ENCODE measurements at regions of chr14 and their contacts with region 1.

Region 1: DNA sequence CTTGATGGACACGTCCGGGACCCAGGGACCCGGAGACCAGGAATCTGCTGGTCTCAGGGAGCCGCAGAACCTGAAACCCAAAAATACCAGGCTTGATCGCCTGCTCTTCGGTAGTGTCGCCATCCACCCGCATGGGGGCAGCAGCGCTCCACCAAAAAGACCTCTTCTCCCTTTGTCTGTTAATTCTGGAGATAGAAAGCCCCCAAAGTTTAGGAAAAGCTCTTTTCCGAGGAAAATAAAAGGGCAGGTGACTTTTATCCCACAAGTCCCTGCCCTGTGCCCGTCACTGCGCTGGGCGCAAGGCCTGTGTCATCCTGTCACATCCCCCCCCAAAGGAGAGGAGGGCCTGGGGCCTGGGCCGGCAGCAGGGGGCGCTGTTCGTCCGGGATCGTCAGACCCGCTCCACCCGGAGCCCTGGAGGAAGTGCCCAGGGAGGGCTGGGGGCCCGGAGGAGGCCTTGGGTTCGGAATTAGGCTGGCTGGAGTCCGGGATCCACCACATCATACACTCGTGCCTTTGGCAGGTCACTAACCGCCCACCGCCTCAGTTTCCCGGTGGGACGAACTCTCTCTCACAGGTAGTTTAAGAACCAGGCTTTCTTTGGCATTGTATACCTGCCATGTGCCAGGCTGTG is 31.9 kb downstream of the DAD1 start:
- DNase-seq: peak; percentile 84 to 97 (median 93)
- ATAC-seq: peak; percentile 48
- H3K4me3 ChIP-seq: peak overlapping the region; percentile 65
- H3K4me3 Mint-ChIP-seq: peak overlapping the region; percentile 67 to 95 (median 88)
- H3K27ac ChIP-seq: peak overlapping the region; percentile 96
- H3K27ac Mint-ChIP-seq: peak overlapping the region; percentile 94 to 99 (median 99)
- H3K4me1 ChIP-seq: peaks cover 87 to 90% of the 10 kb centered on the region in 2 donors
- H3K4me1 Mint-ChIP-seq: peaks cover 62 to 95% (median 92%) of the 10 kb centered on the region in 7 donors
- H3K27me3 ChIP-seq: no peaks in the 10 kb centered on the region
- H3K27me3 Mint-ChIP-seq: peaks cover 0 to 4% (median 0%) of the 10 kb centered on the region in 5 donors

Region 2: GRCh38 chr14:21643407-21643806 is 913.7 kb before region 1 on chr14:
- CTCF ChIA-PET with region 1: no interaction called
- POLR2A ChIA-PET with region 1: no interaction called
- intact Hi-C with region 1: loop called in 1 of 2 experiments (anchors 5 kb)
- DNase-seq: peak in 1 of 9 donors; percentile 5
- ATAC-seq: no peak
- H3K4me3 ChIP-seq: no peak overlapping the region
- H3K4me3 Mint-ChIP-seq: peak overlapping the region in 3 of 10 donors; percentile 42 to 52 (median 42)
- H3K27ac ChIP-seq: no peak overlapping the region
- H3K27ac Mint-ChIP-seq: peak overlapping the region in 3 of 9 donors; percentile 25 to 64 (median 36)
- H3K4me1 ChIP-seq: no peaks in the 10 kb centered on the region
- H3K4me1 Mint-ChIP-seq: peaks cover 0 to 14% (median 6%) of the 10 kb centered on the region in 7 donors
- H3K27me3 ChIP-seq: no peaks in the 10 kb centered on the region
- H3K27me3 Mint-ChIP-seq: peaks cover 0 to 17% (median 4%) of the 10 kb centered on the region in 5 donors

Region 3: GRCh38 chr14:21860172-21860571 is 696.9 kb before region 1 on chr14:
- CTCF ChIA-PET with region 1: interaction called, 4 read pairs
- POLR2A ChIA-PET with region 1: interaction called, 18 read pairs
- intact Hi-C with region 1: loop called (anchors 1 to 5 kb)
- DNase-seq: peak in 7 of 9 donors; percentile 32 to 56 (median 47)
- ATAC-seq: peak; percentile 68
- H3K4me3 ChIP-seq: no peak overlapping the region
- H3K4me3 Mint-ChIP-seq: peak overlapping the region; percentile 40 to 89 (median 72)
- H3K27ac ChIP-seq: peak overlapping the region; percentile 7
- H3K27ac Mint-ChIP-seq: peak overlapping the region in 8 of 9 donors; percentile 7 to 77 (median 29)
- H3K4me1 ChIP-seq: no peaks in the 10 kb centered on the region
- H3K4me1 Mint-ChIP-seq: peaks cover 3 to 19% (median 11%) of the 10 kb centered on the region in 7 donors
- H3K27me3 ChIP-seq: no peaks in the 10 kb centered on the region
- H3K27me3 Mint-ChIP-seq: peaks cover 0 to 29% (median 4%) of the 10 kb centered on the region in 5 donors

Region 4: GRCh38 chr14:22002860-22003309 is 554.2 kb before region 1 on chr14:
- CTCF ChIA-PET with region 1: interaction called, 3 read pairs
- POLR2A ChIA-PET with region 1: interaction called, 10 read pairs
- intact Hi-C with region 1: loop called (anchors 1 to 2 kb)
- DNase-seq: peak; percentile 27 to 71 (median 66)
- ATAC-seq: peak; percentile 89
- H3K4me3 ChIP-seq: peak overlapping the region; percentile 65
- H3K4me3 Mint-ChIP-seq: peak overlapping the region; percentile 78 to 88 (median 84)
- H3K27ac ChIP-seq: peak overlapping the region; percentile 62
- H3K27ac Mint-ChIP-seq: peak overlapping the region; percentile 90 to 96 (median 94)
- H3K4me1 ChIP-seq: peaks cover 6 to 14% of the 10 kb centered on the region in 2 donors
- H3K4me1 Mint-ChIP-seq: peaks cover 3 to 31% (median 29%) of the 10 kb centered on the region in 7 donors
- H3K27me3 ChIP-seq: no peaks in the 10 kb centered on the region
- H3K27me3 Mint-ChIP-seq: no peaks in the 10 kb centered on the region

Region 5: GRCh38 chr14:22303589-22304195 is 253.4 kb before region 1 on chr14:
- CTCF ChIA-PET with region 1: no interaction called
- POLR2A ChIA-PET with region 1: interaction called, 4 read pairs
- intact Hi-C with region 1: loop called (anchors 5 to 10 kb)
- DNase-seq: peak in 3 of 9 donors; percentile 4 to 17 (median 9)
- ATAC-seq: no peak
- H3K4me3 ChIP-seq: no peak overlapping the region
- H3K4me3 Mint-ChIP-seq: peak overlapping the region; percentile 59 to 79 (median 74)
- H3K27ac ChIP-seq: peak overlapping the region; percentile 21
- H3K27ac Mint-ChIP-seq: peak overlapping the region in 5 of 9 donors; percentile 31 to 76 (median 63)
- H3K4me1 ChIP-seq: no peaks in the 10 kb centered on the region
- H3K4me1 Mint-ChIP-seq: no peaks in the 10 kb centered on the region
- H3K27me3 ChIP-seq: no peaks in the 10 kb centered on the region
- H3K27me3 Mint-ChIP-seq: no peaks in the 10 kb centered on the region

Region 6: DNA sequence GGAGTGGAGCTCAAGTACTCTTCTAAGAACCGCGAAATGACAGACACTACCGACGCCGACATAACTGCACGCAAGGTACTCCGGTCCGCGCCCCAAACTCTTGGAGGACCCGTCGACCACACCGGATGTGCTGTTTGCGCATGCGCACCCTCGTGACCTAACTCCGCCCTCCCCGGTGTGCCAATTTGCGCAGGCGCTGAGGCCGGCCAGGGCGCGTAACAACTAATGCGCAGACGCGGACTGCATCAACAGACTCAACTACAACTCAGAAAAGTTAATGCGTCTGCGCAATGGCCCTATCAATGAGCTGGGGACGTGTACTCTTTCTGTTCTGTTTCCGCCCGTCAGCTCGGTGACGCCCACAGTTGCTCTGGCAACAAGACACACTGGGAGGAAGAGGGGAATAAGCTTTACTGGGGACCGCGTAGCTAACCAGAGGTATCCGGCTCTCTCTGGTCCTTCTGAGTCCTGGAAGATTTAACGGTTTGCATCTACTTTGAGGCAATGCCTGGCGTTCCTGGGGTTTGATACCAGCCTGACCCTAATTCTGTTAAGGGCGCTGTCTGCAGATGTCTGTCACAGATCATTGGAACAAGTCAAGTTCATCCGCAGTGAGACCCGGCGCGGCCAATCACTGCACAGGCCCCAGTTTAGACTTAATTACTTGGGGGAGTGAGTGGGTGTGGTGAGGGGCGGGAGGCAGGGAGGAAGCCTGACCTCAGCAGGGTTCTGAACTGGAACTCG is 32.2 kb after region 1 on chr14 and contains the start of gene DAD1:
- CTCF ChIA-PET with region 1: interaction called, 22 read pairs
- POLR2A ChIA-PET with region 1: interaction called, 25 read pairs
- intact Hi-C with region 1: loop called in 1 of 2 experiments (anchors 1 kb)
- DNase-seq: peak; percentile 100
- ATAC-seq: peak; percentile 94
- H3K4me3 ChIP-seq: peak within 1 kb of the TSS; percentile 81
- H3K4me3 Mint-ChIP-seq: peak within 1 kb of the TSS; percentile 83 to 99 (median 96)
- H3K27ac ChIP-seq: peak within 1 kb of the TSS; percentile 96
- H3K27ac Mint-ChIP-seq: peak within 1 kb of the TSS; percentile 90 to 100 (median 99)
- H3K4me1 ChIP-seq: peaks cover 30 to 38% of the 10 kb centered on the region in 2 donors
- H3K4me1 Mint-ChIP-seq: peaks cover 34 to 62% (median 53%) of the 10 kb centered on the region in 7 donors
- H3K27me3 ChIP-seq: no peaks in the 10 kb centered on the region
- H3K27me3 Mint-ChIP-seq: peaks cover 0 to 17% (median 0%) of the 10 kb centered on the region in 5 donors
- total RNA-seq, gene DAD1: 68.8 to 157 (median 117) TPM

Region 7: DNA sequence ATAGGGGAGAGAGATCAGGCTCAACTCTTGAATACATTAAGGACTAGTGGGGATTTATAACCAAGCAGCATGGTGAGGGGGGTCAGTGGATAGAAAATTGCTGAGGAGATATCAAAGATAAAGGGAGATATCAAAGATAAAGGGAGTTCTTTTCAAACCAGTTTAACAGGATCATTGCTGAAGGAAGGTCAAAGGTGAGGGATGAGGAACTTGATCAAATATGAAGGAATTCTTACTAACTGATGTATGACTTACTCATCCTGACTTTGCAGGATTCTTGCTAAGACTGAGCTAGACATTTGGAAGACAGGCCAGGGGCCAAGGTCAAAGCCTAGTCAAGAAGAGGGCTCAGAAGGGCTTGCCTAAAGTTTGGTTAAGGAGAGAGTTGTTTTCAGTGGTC is 45.7 kb after region 1 on chr14:
- CTCF ChIA-PET with region 1: no interaction called
- POLR2A ChIA-PET with region 1: no interaction called
- intact Hi-C with region 1: no loop called
- DNase-seq: no peak
- ATAC-seq: no peak
- H3K4me3 ChIP-seq: no peak overlapping the region
- H3K4me3 Mint-ChIP-seq: no peak overlapping the region
- H3K27ac ChIP-seq: no peak overlapping the region
- H3K27ac Mint-ChIP-seq: peak overlapping the region in 1 of 9 donors; percentile 48
- H3K4me1 ChIP-seq: peaks cover 10 to 15% of the 10 kb centered on the region in 2 donors
- H3K4me1 Mint-ChIP-seq: peaks cover 23 to 37% (median 27%) of the 10 kb centered on the region in 7 donors
- H3K27me3 ChIP-seq: no peaks in the 10 kb centered on the region
- H3K27me3 Mint-ChIP-seq: no peaks in the 10 kb centered on the region

Region 8: GRCh38 chr14:22658946-22659345 is 101.8 kb after region 1 on chr14:
- CTCF ChIA-PET with region 1: no interaction called
- POLR2A ChIA-PET with region 1: no interaction called
- intact Hi-C with region 1: no loop called
- DNase-seq: no peak
- ATAC-seq: no peak
- H3K4me3 ChIP-seq: no peak overlapping the region
- H3K4me3 Mint-ChIP-seq: no peak overlapping the region
- H3K27ac ChIP-seq: no peak overlapping the region
- H3K27ac Mint-ChIP-seq: no peak overlapping the region
- H3K4me1 ChIP-seq: no peaks in the 10 kb centered on the region
- H3K4me1 Mint-ChIP-seq: peaks cover 0 to 4% (median 0%) of the 10 kb centered on the region in 7 donors
- H3K27me3 ChIP-seq: no peaks in the 10 kb centered on the region
- H3K27me3 Mint-ChIP-seq: peaks cover 0 to 6% (median 0%) of the 10 kb centered on the region in 5 donors

Region 9: DNA sequence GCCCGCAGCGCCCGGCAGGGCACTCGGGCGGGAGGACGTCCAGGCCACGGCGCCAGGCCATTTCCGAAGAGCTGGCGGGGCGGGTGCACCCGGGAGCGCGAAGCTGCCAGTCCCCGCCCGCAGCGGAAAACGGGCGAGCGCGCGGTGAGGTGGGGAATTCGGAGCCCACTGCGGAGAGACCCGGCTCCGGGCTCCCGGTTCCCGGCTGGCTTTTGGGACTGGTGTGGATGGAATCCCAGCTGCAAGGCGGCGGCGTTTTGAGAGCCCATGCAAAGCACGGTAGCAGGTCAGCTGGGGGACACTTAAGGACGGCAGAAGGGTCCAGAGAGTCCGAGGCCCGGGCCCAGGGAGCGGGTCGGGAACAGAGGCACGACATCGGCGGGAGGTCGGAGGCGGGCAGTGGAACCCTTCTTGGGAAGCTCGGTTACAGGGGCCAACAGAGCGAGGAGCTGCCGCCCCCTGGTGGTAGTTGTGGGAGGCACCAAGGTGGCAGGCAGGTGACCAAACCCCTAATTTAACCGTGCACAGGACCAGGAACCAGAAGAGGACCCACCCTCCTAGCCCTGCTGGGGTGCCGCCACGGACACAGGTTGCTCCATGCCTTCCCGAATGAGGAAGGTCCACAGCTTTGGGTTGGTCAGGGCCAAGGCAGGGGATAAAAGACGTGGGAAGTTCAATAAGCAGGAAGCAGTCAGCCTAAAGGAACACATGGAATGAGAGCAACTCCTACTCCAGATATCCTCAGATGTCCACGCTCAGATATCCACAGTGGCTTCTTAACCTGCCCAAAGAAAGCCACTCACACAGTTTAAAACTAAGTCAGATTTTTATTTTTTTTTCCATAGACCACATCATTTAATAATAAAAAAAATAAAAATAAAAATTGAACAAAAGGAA is 500.9 kb after region 1 on chr14:
- CTCF ChIA-PET with region 1: interaction called, 3 read pairs
- POLR2A ChIA-PET with region 1: no interaction called
- intact Hi-C with region 1: loop called in 1 of 2 experiments (anchors 1 kb)
- DNase-seq: peak; percentile 71 to 89 (median 83)
- ATAC-seq: peak; percentile 81
- H3K4me3 ChIP-seq: peak overlapping the region; percentile 67
- H3K4me3 Mint-ChIP-seq: peak overlapping the region; percentile 78 to 91 (median 87)
- H3K27ac ChIP-seq: peak overlapping the region; percentile 49
- H3K27ac Mint-ChIP-seq: peak overlapping the region in 7 of 9 donors; percentile 23 to 85 (median 58)
- H3K4me1 ChIP-seq: peaks cover 7 to 9% of the 10 kb centered on the region in 2 donors
- H3K4me1 Mint-ChIP-seq: peaks cover 13 to 20% (median 17%) of the 10 kb centered on the region in 7 donors
- H3K27me3 ChIP-seq: no peaks in the 10 kb centered on the region
- H3K27me3 Mint-ChIP-seq: peaks cover 0 to 8% (median 0%) of the 10 kb centered on the region in 5 donors

Region 10: GRCh38 chr14:23137192-23137829 is 580.2 kb after region 1 on chr14:
- CTCF ChIA-PET with region 1: no interaction called
- POLR2A ChIA-PET with region 1: no interaction called
- intact Hi-C with region 1: no loop called
- DNase-seq: no peak
- ATAC-seq: no peak
- H3K4me3 ChIP-seq: no peak overlapping the region
- H3K4me3 Mint-ChIP-seq: no peak overlapping the region
- H3K27ac ChIP-seq: no peak overlapping the region
- H3K27ac Mint-ChIP-seq: no peak overlapping the region
- H3K4me1 ChIP-seq: no peaks in the 10 kb centered on the region
- H3K4me1 Mint-ChIP-seq: peaks cover 0 to 4% (median 0%) of the 10 kb centered on the region in 7 donors
- H3K27me3 ChIP-seq: no peaks in the 10 kb centered on the region
- H3K27me3 Mint-ChIP-seq: peaks cover 0 to 10% (median 0%) of the 10 kb centered on the region in 5 donors